Heart left ventricle (tissue), 16 donors: ENCODE measurements at regions of chr6 and their contacts with region 1.

Region 1: GRCh38 chr6:52881996-52882841 is 27.3 kb downstream of the GSTA3 start:
- DNase-seq: peak; percentile 41 to 63 (median 53)
- ATAC-seq: peak; percentile 86 to 98 (median 97)
- H3K4me3 ChIP-seq: peak overlapping the region; percentile 17 to 62 (median 54)
- H3K27ac ChIP-seq: peak overlapping the region in 1 of 12 donors; percentile 15
- H3K4me1 ChIP-seq: peaks cover 0 to 5% (median 0%) of the 10 kb centered on the region in 12 donors
- H3K27me3 ChIP-seq: no peaks in the 10 kb centered on the region
- CTCF ChIP-seq: peak; percentile 71 to 88 (median 80)
- POLR2A ChIP-seq: no peak

Region 2: GRCh38 chr6:52922161-52922560 is 39.9 kb after region 1 on chr6:
- intact Hi-C with region 1: no loop called
- DNase-seq: no peak
- ATAC-seq: no peak
- H3K4me3 ChIP-seq: no peak overlapping the region
- H3K27ac ChIP-seq: no peak overlapping the region
- H3K4me1 ChIP-seq: no peaks in the 10 kb centered on the region
- H3K27me3 ChIP-seq: no peaks in the 10 kb centered on the region
- CTCF ChIP-seq: no peak
- POLR2A ChIP-seq: no peak

Region 3: DNA sequence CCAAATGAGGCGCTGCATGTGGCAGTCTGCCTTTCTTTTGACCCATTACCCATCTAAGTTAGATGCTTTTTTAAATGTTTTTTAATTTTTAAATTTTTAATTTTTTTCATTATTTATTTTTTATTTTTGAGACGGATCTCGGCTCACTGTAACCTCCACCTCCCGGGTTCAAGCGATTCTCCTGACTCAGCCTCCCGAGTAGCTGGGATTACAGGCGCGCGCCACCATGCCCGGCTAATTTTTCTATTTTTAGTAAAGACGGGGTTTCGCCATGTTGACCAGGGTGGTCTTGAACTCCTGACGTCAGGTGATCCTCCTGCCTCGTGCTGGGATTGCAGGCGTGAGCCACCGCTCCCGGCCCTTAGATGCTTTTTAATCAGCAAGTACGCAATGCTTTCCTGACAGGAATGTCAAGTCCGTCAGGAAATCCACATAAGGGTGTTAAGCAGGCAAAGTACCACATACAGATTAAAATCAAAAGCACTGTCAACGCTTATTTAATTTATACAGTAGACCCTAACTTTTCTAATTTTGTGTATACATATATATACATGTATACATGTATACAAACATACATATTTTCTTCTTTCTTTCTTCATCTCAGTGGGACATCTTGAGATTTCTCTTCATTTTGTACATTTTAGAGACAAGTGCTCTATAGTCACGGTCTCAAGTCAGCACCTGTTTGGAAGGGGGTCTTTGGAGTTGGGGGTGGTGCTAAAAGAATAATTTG is 113.9 kb after region 1 on chr6:
- intact Hi-C with region 1: loop called in 3 of 10 experiments (anchors 5 to 10 kb)
- DNase-seq: peak in 4 of 5 donors; percentile 44 to 51 (median 45)
- ATAC-seq: peak in 2 of 4 donors; percentile 4 to 7
- H3K4me3 ChIP-seq: peak overlapping the region in 10 of 12 donors; percentile 26 to 80 (median 58)
- H3K27ac ChIP-seq: peak overlapping the region in 11 of 12 donors; percentile 58 to 98 (median 91)
- H3K4me1 ChIP-seq: peaks cover 0 to 25% (median 15%) of the 10 kb centered on the region in 12 donors
- H3K27me3 ChIP-seq: no peaks in the 10 kb centered on the region
- CTCF ChIP-seq: no peak
- POLR2A ChIP-seq: no peak